Aorta (tissue), 5 donors: ENCODE measurements at regions of chr9 and their contacts with region 1.

Region 1: DNA sequence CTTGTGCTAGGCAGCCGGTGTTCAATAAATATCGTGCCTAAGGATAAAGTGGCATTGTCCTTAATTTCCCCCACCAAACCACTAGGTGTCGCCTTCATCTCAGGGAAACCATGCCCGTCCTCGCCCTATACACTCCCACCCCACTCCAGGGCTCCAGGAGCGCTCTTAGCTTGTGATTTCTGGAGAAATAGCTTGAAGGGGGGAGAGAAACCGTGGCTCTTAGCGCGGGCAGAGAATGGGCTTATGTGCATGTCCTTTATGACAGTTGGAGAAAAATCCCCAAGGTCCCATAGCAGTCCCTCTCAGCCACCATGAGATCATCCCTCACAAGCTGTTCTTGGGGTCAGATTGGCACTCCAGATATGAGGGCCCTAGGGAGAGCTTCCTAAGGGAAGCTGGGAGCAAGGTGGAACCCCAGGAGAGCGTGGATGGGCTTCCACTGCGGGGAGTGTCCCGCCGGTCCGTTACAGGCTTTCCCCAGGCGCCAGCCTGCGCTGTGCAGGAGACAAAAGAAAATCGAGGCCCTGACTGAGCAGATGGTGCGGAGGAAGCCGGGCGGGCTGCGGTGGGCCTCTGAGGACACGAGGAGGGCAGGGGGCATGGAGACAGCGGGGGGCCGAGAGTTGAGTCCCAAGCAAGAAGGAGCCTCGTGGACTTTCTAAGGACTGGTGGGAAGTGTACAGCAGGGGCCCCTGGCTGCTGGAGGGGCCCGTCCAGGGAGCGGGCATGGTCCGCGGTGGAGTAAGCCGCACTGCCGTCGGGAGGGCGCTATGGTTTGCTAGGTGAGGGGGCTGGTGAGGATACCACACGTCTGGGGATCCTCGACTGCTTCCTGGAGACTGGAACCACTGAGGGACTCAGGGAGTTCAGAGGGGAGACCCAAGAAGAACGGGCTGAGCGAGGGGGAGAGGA is 750 bp upstream of the NPR2 start:
- DNase-seq: peak; percentile 79 to 82
- ATAC-seq: peak; percentile 92
- H3K4me3 ChIP-seq: peak overlapping the region; percentile 11 to 32
- H3K27ac ChIP-seq: peak overlapping the region; percentile 10 to 15
- H3K4me1 ChIP-seq: no peaks in the 10 kb centered on the region
- H3K27me3 ChIP-seq: no peaks in the 10 kb centered on the region

Region 2: GRCh38 chr9:34400275-34400674 is 1390.4 kb before region 1 on chr9:
- intact Hi-C with region 1: no loop called
- DNase-seq: no peak
- ATAC-seq: no peak
- H3K4me3 ChIP-seq: no peak overlapping the region
- H3K27ac ChIP-seq: no peak overlapping the region
- H3K4me1 ChIP-seq: no peaks in the 10 kb centered on the region
- H3K27me3 ChIP-seq: no peaks in the 10 kb centered on the region

Region 3: DNA sequence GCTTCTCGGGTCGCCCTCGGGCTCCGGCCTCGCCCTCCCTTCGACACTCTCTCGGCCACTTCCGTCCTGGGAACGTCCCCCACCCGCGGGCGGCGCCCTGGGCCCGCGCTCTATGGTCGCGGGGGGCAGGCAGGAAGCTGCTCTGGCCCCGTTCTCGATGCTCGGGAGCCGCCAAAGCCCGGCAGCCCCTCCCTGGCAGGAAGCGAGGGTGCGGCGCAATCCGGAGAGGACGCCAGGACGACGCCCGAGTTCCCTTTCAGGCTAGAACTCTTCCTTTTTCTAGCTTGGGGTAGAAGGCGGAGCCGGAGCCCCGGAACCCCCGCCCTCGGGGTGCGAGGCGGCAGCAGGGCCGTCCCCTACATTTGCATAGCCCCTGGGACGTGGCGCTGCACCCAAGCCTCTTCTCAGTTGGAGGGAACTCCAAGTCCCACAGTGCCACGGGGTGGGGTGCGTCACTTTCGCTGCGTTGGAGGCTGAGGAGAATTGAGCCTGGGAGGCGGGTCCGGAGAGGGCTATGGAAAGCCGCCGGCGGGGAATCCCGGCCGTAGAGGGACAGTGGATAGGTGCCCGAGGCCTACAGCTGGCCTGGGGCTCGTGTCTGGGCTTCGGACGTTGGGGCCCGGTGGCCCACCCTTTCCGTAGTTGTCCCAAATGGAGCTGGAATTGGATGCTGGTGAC is 58.4 kb before region 1 on chr9 and contains the starts of genes CREB3 and TLN1:
- intact Hi-C with region 1: loop called in 1 of 2 experiments (anchors 5 kb)
- DNase-seq: peak; percentile 99 to 100
- ATAC-seq: peak; percentile 94
- H3K4me3 ChIP-seq: peak within 1 kb of the TSS; percentile 65 to 97
- H3K27ac ChIP-seq: peak within 1 kb of the TSS; percentile 94 to 98
- H3K4me1 ChIP-seq: no peaks in the 10 kb centered on the region
- H3K27me3 ChIP-seq: no peaks in the 10 kb centered on the region
- total RNA-seq, gene CREB3: 39.5 to 51.3 TPM
- total RNA-seq, gene TLN1: 735 to 1,271 TPM

Region 4: GRCh38 chr9:35829084-35829763 is 38.6 kb after region 1 on chr9 and contains the start of gene TMEM8B:
- intact Hi-C with region 1: loop called in 1 of 2 experiments (anchors 5 kb)
- DNase-seq: peak; percentile 98
- ATAC-seq: peak; percentile 92
- H3K4me3 ChIP-seq: peak within 1 kb of the TSS; percentile 45 to 46
- H3K27ac ChIP-seq: peak within 1 kb of the TSS; percentile 66 to 87
- H3K4me1 ChIP-seq: peaks cover 0 to 5% of the 10 kb centered on the region in 2 donors
- H3K27me3 ChIP-seq: no peaks in the 10 kb centered on the region
- total RNA-seq, gene TMEM8B: 16.3 to 20.8 TPM

Region 5: DNA sequence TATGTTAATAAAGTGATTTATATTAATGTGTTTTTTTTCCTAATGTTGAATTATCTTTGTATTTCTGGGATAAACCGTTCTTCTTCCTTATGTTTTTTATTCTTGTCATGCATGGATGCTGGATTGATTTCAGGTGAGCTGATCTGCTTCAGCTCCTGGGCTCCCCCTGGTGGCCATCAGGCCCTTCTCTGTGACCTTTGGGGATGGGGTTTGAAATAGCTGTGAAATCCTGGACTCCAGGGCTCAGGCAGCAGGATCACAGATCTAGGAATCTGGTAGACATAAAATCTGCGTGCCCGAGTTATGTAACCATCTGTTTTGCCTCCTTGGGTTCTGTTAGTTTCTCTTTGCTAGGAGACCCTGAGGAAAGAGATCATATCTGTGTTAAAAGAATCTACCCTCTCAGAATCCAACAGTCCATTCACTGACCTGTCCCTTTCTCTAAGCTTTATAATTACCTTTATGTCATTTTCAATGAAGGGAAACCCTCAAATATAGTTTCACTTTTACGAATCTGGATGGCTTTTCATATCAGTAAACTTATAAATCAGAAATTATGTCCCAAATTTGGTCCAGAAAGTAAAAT is 91.7 kb after region 1 on chr9:
- intact Hi-C with region 1: loop called (anchors 1 kb)
- DNase-seq: peak; percentile 87 to 95
- ATAC-seq: peak; percentile 88
- H3K4me3 ChIP-seq: no peak overlapping the region
- H3K27ac ChIP-seq: no peak overlapping the region
- H3K4me1 ChIP-seq: no peaks in the 10 kb centered on the region
- H3K27me3 ChIP-seq: no peaks in the 10 kb centered on the region

Region 6: GRCh38 chr9:36023260-36024048 is 232.8 kb after region 1 on chr9:
- intact Hi-C with region 1: loop called in 1 of 2 experiments (anchors 10 kb)
- DNase-seq: peak; percentile 72 to 78
- ATAC-seq: peak; percentile 71
- H3K4me3 ChIP-seq: no peak overlapping the region
- H3K27ac ChIP-seq: no peak overlapping the region
- H3K4me1 ChIP-seq: no peaks in the 10 kb centered on the region
- H3K27me3 ChIP-seq: no peaks in the 10 kb centered on the region